MCF 10A (cell line): ENCODE measurements at regions of chr11 and their contacts with region 1.

Region 1: DNA sequence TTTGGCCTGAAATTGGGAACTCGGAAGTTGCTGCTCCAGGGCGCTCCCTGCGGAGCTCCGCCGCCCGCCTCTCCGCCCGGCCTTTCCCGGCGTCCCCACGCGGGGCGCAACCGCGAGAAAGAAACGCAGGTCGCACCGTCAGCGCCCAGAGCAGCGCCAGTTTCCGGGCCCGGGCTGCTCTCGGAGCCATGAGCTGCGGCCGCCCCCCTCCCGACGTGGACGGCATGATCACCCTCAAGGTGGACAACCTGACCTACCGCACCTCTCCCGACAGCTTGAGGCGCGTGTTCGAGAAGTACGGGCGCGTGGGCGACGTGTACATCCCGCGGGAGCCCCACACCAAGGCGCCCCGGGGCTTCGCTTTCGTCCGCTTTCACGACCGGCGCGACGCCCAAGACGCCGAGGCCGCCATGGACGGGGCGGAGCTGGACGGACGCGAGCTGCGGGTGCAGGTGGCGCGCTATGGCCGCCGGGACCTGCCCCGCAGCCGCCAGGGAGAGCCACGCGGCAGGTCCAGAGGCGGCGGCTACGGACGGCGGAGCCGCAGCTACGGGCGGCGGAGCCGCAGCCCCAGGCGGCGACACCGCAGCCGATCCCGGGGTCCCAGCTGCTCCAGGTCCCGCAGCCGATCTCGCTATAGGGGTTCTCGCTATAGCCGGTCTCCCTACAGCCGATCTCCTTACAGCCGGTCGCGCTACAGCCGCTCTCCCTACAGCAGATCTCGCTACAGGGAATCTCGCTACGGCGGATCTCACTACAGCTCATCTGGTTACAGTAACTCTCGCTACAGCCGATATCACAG is 521 bp downstream of the SRSF8 start:
- DNase-seq: peak; percentile 67
- H3K4me3 Mint-ChIP-seq: peak overlapping the region; percentile 99
- H3K27ac Mint-ChIP-seq: peak overlapping the region; percentile 95
- H3K4me1 Mint-ChIP-seq: peaks cover 15% of the 10 kb centered on the region
- H3K27me3 Mint-ChIP-seq: no peaks in the 10 kb centered on the region
- CTCF ChIP-seq: peak; percentile 50

Region 2: GRCh38 chr11:94705896-94706615 is 361.2 kb before region 1 on chr11:
- CTCF ChIA-PET with region 1: no interaction called
- POLR2A ChIA-PET with region 1: interaction called, 11 read pairs
- intact Hi-C with region 1: no loop called
- DNase-seq: peak; percentile 83
- H3K4me3 Mint-ChIP-seq: peak overlapping the region; percentile 81
- H3K27ac Mint-ChIP-seq: peak overlapping the region; percentile 95
- H3K4me1 Mint-ChIP-seq: peaks cover 18% of the 10 kb centered on the region
- H3K27me3 Mint-ChIP-seq: no peaks in the 10 kb centered on the region
- CTCF ChIP-seq: no peak

Region 3: DNA sequence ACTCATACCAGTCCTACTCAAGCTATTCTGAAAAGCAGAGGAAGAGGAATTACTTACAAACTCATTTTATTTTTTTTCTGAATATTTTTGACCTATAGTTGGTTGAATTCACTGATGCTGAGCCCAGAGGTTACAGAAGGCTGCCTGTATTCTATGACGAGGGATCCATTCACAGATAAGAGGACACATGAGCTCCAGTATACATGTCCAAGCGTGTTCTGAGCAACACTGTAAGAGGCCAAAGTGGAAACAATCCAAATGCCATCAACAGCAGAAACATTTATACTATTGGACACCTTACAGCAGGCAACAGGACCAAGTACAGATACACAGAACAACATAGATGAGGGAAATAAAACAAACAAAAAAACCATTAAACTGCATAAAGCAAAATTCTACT is 31.9 kb before region 1 on chr11:
- CTCF ChIA-PET with region 1: no interaction called
- POLR2A ChIA-PET with region 1: interaction called, 45 read pairs
- intact Hi-C with region 1: no loop called
- DNase-seq: peak; percentile 36
- H3K4me3 Mint-ChIP-seq: no peak overlapping the region
- H3K27ac Mint-ChIP-seq: no peak overlapping the region
- H3K4me1 Mint-ChIP-seq: peaks cover 9% of the 10 kb centered on the region
- H3K27me3 Mint-ChIP-seq: no peaks in the 10 kb centered on the region
- CTCF ChIP-seq: no peak

Region 4: DNA sequence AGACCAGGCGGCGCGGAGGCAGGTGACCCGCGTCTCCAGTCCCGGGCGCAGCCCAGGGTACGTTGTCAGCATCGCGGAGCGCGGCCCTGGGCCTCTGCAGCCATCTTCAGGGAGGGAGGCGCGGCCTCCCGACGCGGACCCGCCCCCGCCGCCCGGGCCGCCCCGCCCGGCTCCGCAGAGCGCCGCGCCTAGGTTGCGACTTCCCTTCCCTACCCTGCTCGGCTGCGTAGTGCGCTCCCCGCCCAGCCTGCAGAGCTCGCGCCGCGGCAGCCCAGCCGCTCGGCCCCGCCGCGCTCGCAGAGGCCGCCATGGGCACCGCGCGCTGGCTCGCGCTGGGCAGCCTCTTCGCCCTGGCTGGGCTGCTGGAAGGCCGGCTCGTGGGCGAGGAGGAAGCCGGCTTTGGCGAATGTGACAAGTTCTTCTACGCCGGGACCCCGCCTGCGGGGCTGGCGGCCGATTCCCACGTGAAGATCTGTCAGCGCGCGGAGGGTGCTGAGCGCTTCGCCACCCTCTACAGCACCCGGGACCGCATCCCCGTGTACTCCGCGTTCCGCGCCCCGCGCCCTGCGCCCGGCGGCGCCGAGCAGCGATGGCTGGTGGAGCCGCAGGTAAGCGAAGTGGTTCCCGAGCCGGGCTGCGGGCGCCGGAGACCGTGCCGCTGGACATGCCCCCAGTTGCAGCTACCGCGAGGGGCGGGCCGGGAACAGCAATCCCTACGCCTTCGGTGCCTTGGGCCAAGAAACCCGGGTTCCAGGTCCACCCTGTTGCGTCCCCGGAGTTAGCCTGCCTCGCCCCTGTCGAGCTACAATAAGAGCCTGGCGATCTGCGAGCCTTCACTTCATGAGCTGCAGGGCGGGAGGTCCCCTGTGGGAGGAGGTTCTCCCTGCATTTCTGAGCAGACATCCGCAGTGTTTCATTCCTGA is 22.6 kb after region 1 on chr11 and contains the start of gene ENDOD1:
- CTCF ChIA-PET with region 1: interaction called, 50 read pairs
- POLR2A ChIA-PET with region 1: interaction called, 108 read pairs
- intact Hi-C with region 1: loop called (anchors 1 kb)
- DNase-seq: peak; percentile 80
- H3K4me3 Mint-ChIP-seq: peak within 1 kb of the TSS; percentile 85
- H3K27ac Mint-ChIP-seq: peak within 1 kb of the TSS; percentile 64
- H3K4me1 Mint-ChIP-seq: peaks cover 36% of the 10 kb centered on the region
- H3K27me3 Mint-ChIP-seq: no peaks in the 10 kb centered on the region
- CTCF ChIP-seq: no peak
- total RNA-seq, gene ENDOD1: 10.8 and 11.4 TPM in 2 replicates

Region 5: GRCh38 chr11:95138448-95138847 is 71.2 kb after region 1 on chr11:
- CTCF ChIA-PET with region 1: interaction called, 10 read pairs
- POLR2A ChIA-PET with region 1: interaction called, 190 read pairs
- intact Hi-C with region 1: loop called (anchors 5 kb)
- DNase-seq: peak; percentile 20
- H3K4me3 Mint-ChIP-seq: no peak overlapping the region
- H3K27ac Mint-ChIP-seq: no peak overlapping the region
- H3K4me1 Mint-ChIP-seq: peaks cover 13% of the 10 kb centered on the region
- H3K27me3 Mint-ChIP-seq: no peaks in the 10 kb centered on the region
- CTCF ChIP-seq: no peak

Region 6: DNA sequence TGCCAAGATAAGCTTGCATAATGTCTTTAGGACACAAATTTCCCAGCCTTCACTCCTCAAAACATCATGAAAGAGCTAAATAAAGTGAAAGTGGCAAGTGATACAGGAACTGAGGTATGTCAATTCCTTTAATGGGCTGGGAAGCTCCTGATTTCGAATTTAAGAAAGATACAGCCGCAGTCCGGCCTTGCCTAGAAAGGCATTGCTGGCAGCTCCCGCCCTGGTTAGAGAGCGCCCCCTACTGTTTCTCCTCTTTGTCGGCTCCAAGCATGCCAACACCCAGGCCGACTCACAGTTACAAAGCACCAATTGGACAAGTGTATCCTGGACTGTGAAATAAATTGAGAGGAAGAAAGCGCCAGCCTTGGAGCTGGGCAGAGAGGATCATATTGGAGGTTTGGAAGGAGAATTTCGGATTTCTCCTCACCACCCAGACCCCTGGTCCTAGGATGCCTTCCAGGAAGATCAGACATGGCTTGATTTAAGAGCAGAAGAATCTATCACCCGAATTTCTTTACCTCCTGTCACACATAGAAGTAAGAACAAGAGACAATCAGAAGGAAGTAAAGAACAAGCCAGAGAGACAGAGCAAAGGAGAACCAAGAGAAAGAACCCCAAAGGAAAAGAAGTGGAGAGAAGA is 638.4 kb after region 1 on chr11:
- CTCF ChIA-PET with region 1: interaction called, 8 read pairs
- POLR2A ChIA-PET with region 1: no interaction called
- intact Hi-C with region 1: loop called (anchors 1 kb)
- DNase-seq: peak; percentile 83
- H3K4me3 Mint-ChIP-seq: no peak overlapping the region
- H3K27ac Mint-ChIP-seq: no peak overlapping the region
- H3K4me1 Mint-ChIP-seq: peaks cover 6% of the 10 kb centered on the region
- H3K27me3 Mint-ChIP-seq: no peaks in the 10 kb centered on the region
- CTCF ChIP-seq: peak; percentile 96